GM12878 (cell line): ENCODE measurements at regions of chr9 and their contacts with region 1.

Region 1: GRCh38 chr9:1673300-1673699 is 341.8 kb upstream of the SMARCA2 start:
- DNase-seq: no peak
- ATAC-seq: no peak
- H3K4me3 ChIP-seq: no peak overlapping the region
- H3K27ac ChIP-seq: no peak overlapping the region
- H3K4me1 ChIP-seq: no peaks in the 10 kb centered on the region
- H3K27me3 ChIP-seq: no peaks in the 10 kb centered on the region; a peak in 1 of 4 replicates
- CTCF ChIP-seq: no peak
- EP300 ChIP-seq: no peak
- POLR2A ChIP-seq: no peak
- RAD21 ChIP-seq: no peak

Region 2: GRCh38 chr9:573671-574410 is 1099.5 kb before region 1 on chr9:
- CTCF ChIA-PET with region 1: no interaction called
- POLR2A ChIA-PET with region 1: no interaction called
- RAD21 ChIA-PET with region 1: no interaction called
- SMC1A ChIA-PET with region 1: no interaction called
- in situ Hi-C with region 1: no loop called
- intact Hi-C with region 1: no loop called
- DNase-seq: no peak
- ATAC-seq: no peak
- H3K4me3 ChIP-seq: no peak overlapping the region
- H3K27ac ChIP-seq: no peak overlapping the region
- H3K4me1 ChIP-seq: no peaks in the 10 kb centered on the region
- H3K27me3 ChIP-seq: no peaks in the 10 kb centered on the region
- CTCF ChIP-seq: no peak
- EP300 ChIP-seq: no peak
- POLR2A ChIP-seq: no peak
- RAD21 ChIP-seq: no peak

Region 3: DNA sequence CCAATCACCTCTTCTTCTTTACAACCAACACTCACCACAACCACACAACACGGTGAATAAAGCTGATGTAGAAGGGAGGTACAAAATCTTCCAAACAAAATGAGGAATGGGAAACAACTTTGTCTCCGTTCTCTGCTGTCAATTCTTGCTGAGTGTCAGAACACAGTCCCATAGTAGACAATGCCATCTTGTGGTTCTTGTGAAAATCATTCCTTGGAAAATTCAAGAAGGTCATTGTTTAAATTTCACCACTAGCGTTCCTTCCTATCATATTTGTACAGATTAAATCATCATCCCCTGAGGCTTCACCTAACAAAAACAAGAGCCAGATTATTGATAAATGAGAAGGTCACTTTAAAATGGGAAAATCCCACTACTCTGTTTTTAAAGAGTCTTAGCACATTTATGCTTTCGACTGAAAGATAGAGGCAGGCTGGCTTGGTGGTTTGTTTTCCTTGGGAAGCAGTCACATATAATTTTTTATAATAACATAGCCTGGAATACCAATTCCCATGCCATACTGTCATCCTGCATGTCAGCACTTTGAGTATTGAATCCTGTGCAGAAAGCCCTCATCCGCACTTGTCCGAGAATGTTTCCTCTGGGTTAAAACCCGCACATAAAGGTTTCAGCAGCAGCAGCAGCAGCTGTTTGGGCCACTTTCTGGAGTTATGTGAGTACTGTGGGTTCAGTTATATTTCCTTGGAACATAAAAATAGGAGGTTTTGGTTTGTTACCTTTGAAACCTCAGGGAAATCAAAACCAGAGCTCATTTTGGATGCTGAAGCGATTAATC is 53.2 kb before region 1 on chr9:
- CTCF ChIA-PET with region 1: no interaction called
- POLR2A ChIA-PET with region 1: no interaction called
- RAD21 ChIA-PET with region 1: no interaction called
- SMC1A ChIA-PET with region 1: no interaction called
- in situ Hi-C with region 1: loop called (anchors 10 kb)
- intact Hi-C with region 1: no loop called
- DNase-seq: no peak
- ATAC-seq: no peak
- H3K4me3 ChIP-seq: no peak overlapping the region
- H3K27ac ChIP-seq: no peak overlapping the region
- H3K4me1 ChIP-seq: no peaks in the 10 kb centered on the region
- H3K27me3 ChIP-seq: no peaks in the 10 kb centered on the region
- CTCF ChIP-seq: peak in 1 of 3 experiments; percentile 43; a peak in 2 of 6 replicates
- EP300 ChIP-seq: no peak
- POLR2A ChIP-seq: no peak
- RAD21 ChIP-seq: peak; percentile 55